PC-3 (cell line): ENCODE measurements at regions of chr2 and their contacts with region 1.

Region 1: GRCh38 chr2:69386789-69387734 is at the start of gene GFPT1:
- DNase-seq: peak; percentile 96
- ATAC-seq: peak; percentile 96
- H3K4me3 ChIP-seq: peak within 1 kb of the TSS; percentile 89
- H3K27ac ChIP-seq: peak within 1 kb of the TSS; percentile 30
- H3K4me1 ChIP-seq: peaks cover 25% of the 10 kb centered on the region
- H3K27me3 ChIP-seq: no peaks in the 10 kb centered on the region
- CTCF ChIP-seq: no peak
- total RNA-seq, gene GFPT1: 18.4 and 20.7 TPM in 2 replicates

Region 2: DNA sequence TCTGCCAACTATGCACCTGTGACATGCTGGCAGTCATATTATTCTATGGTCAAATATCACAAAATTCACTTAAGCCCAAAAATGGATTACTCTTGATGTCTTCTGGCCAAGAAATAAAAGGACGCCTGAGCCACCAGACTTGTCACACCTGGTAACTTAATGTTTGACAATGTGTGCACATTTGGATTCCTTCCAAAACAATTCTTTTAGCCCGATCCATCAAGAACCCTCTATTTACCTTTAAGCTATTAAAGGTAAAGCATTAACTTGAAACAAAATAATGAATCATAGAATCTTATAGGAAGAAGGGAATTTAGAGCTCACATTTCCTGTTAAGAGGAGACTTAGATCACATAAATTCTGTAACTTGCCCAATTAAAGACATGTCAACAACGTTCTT is 96.6 kb after region 1 on chr2:
- CTCF ChIA-PET with region 1: no interaction called
- POLR2A ChIA-PET with region 1: no interaction called
- intact Hi-C with region 1: loop called (anchors 10 kb)
- DNase-seq: peak; percentile 64
- ATAC-seq: peak; percentile 84
- H3K4me3 ChIP-seq: no peak overlapping the region
- H3K27ac ChIP-seq: peak overlapping the region; percentile 10; the same call in 1 of the 2 replicates
- H3K4me1 ChIP-seq: peaks cover 18% of the 10 kb centered on the region
- H3K27me3 ChIP-seq: no peaks in the 10 kb centered on the region
- CTCF ChIP-seq: no peak